Left lung (tissue), 14 donors: ENCODE measurements at regions of chr18 and their contacts with region 1.

Region 1: DNA sequence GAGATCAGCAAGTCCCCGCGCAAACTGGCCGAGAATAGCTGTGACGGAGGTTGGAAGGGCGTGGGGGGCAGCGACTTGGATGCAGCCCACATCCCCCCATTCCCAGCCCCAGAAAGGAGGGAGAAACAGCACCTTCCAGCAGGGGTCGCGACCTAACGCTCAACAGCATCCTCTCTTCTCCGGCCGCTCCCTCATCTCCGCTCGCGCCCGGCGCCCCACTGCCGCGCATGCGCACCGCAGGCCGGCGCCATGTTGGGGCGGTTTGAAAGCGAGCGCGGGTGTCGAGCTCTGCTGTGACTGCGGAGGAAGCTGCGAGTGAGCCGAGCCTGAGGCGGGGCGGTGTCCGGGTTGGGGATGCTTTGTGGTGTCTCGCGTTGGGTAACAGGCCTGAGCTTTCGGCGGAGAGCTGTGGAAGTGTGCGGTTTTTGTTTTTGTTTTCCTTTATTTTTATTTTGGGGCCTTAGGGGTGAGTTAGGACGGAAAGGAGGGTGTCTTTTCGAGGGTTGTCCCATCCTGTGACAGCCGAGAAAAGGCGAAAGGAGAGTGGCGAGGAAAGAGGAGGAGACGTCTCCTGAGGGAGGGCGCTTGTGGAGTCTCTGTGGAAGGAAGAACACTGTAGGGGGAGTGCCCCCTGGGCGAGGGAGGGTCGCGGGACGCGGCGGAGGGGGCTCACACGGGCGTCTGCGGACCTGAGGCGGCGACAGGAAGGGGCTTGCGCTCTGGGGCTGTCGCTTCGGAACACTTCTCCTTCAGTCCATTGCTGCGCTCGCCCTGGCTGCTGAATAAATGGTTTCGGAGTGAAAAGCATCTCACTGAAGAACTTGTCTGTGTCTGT is at the starts of genes C18orf54 and STARD6:
- DNase-seq: peak; percentile 90 to 97 (median 92)
- ATAC-seq: peak; percentile 99
- H3K4me3 ChIP-seq: peak within 1 kb of the TSS; percentile 57 to 65
- H3K27ac ChIP-seq: peak within 1 kb of the TSS; percentile 51 to 71
- H3K4me1 ChIP-seq: peaks cover 0 to 11% of the 10 kb centered on the region in 2 donors
- H3K27me3 ChIP-seq: no peaks in the 10 kb centered on the region
- CTCF ChIP-seq: peak in 1 of 2 donors; percentile 23
- polyA plus RNA-seq, gene C18orf54: 10.4 to 18.5 (median 14.6) TPM
- polyA plus RNA-seq, gene STARD6: 0.42 to 0.43 TPM in 2 of 6 donors, not detected in the others

Region 2: DNA sequence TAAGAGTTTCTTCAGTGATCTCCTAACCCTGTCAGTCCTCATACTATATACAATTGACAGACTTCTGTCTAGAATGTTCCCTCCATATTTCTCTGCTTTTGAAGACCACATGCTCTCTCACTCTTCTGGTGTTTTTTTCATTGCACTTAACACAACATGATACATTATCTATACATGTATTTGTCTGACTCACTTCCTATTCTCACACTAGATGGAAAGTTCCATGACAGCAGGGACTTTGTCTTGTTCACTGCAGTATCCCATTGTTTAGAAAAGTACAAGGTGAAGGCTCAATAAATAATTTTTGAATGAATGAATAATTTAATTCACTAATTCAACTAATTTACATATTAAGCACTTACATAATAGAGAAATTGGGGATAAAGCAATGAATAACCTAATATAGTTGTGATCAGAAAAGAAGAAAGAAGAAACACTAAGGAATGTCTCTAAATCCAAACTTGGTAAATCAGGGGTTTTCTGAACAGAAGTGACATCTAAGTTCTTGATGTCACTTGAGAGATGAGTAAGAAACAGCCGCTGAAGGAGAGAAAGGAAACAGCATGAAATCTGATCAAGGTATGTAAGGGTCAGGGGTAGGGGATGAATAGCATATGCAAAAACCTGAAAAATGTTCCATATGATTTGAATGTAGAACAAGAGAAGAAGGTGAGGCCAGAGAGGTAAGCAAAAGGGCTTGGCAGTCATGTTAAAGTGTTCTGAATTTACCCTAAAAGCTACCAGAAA is 175.8 kb before region 1 on chr18:
- intact Hi-C with region 1: loop called in 1 of 2 experiments (anchors 5 kb)
- DNase-seq: no peak
- ATAC-seq: no peak
- H3K4me3 ChIP-seq: no peak overlapping the region
- H3K27ac ChIP-seq: no peak overlapping the region
- H3K4me1 ChIP-seq: no peaks in the 10 kb centered on the region
- H3K27me3 ChIP-seq: no peaks in the 10 kb centered on the region
- CTCF ChIP-seq: no peak

Region 3: GRCh38 chr18:55096261-55096951 is 738.5 kb after region 1 on chr18:
- intact Hi-C with region 1: no loop called
- DNase-seq: peak in 1 of 4 donors; percentile 39
- ATAC-seq: peak; percentile 73
- H3K4me3 ChIP-seq: no peak overlapping the region
- H3K27ac ChIP-seq: no peak overlapping the region
- H3K4me1 ChIP-seq: no peaks in the 10 kb centered on the region
- H3K27me3 ChIP-seq: no peaks in the 10 kb centered on the region
- CTCF ChIP-seq: no peak